Activated CD4-positive, alpha-beta T cell treated with anti-CD3 and anti-CD28 coated beads for 36 hours (primary cell): ENCODE measurements at regions of chr3 and their contacts with region 1.

Region 1: GRCh38 chr3:43286115-43286840 is at the start of gene SNRK:
- DNase-seq: peak; percentile 95
- ATAC-seq: peak; percentile 77
- H3K4me3 Mint-ChIP-seq: peak within 1 kb of the TSS; percentile 94
- H3K27ac Mint-ChIP-seq: peak within 1 kb of the TSS; percentile 96
- H3K4me1 Mint-ChIP-seq: peaks cover 39% of the 10 kb centered on the region
- H3K27me3 Mint-ChIP-seq: no peaks in the 10 kb centered on the region
- total RNA-seq, gene SNRK: 19.5 to 22.9 TPM

Region 2: DNA sequence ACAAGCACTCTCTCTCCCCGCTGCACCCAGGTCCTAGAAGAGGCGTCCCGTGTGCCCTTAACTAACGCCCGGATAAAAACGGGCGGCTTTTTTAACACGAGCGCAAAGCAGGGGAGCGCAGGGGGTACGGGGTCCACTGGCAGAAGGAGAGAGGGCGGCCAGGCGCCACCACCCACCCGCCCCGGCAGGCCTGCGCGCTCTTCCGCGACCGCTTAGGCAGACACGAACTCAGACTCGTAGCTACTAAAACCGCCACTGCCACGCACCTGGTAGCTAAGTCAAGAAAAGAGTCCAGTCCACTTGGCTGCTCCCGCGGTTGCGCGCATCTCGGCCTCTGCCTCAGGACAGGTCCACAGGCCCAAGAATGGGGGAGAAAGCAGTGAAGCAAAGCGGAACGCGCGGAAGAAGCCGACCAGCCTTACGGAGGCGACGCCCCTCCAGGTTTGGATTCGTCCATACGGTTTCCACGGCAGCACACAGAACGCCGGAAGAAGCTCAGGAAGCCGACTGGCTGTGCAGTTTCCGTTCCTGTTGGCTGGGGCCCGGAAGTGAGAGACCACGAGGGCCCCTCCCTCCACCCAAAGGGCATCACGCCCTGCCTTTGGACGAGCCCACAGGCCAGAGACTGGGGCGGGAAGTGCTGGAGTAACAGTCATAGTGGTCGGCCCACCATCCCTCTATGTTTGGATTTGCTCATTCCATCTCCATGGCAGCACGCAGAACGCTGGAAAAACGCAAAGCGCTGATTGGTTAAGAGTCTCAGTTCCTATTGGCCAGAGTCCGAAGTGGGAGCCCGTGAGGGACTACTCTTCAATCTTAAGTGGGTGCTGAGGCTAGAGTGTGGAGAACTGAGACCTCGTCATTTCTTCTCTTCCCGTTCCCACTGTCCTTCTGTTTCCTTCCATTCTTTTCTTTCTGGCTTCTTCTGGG is 1324.3 kb before region 1 on chr3 and contains the start of gene ULK4:
- CTCF ChIA-PET with region 1: no interaction called
- POLR2A ChIA-PET with region 1: no interaction called
- intact Hi-C with region 1: loop called in 1 of 2 experiments (anchors 5 kb)
- DNase-seq: peak; percentile 96
- ATAC-seq: peak; percentile 91
- H3K4me3 Mint-ChIP-seq: peak within 1 kb of the TSS; percentile 95
- H3K27ac Mint-ChIP-seq: peak within 1 kb of the TSS; percentile 92
- H3K4me1 Mint-ChIP-seq: peaks cover 13% of the 10 kb centered on the region
- H3K27me3 Mint-ChIP-seq: no peaks in the 10 kb centered on the region
- total RNA-seq, gene ULK4: 13.1 to 14.2 TPM

Region 3: GRCh38 chr3:42772670-42773408 is 513.4 kb before region 1 on chr3 and contains the start of gene CCDC13:
- CTCF ChIA-PET with region 1: no interaction called
- POLR2A ChIA-PET with region 1: no interaction called
- intact Hi-C with region 1: loop called in 1 of 2 experiments (anchors 10 kb)
- DNase-seq: peak; percentile 96
- ATAC-seq: peak; percentile 96
- H3K4me3 Mint-ChIP-seq: peak within 1 kb of the TSS; percentile 83
- H3K27ac Mint-ChIP-seq: peak within 1 kb of the TSS; percentile 82
- H3K4me1 Mint-ChIP-seq: peaks cover 12% of the 10 kb centered on the region
- H3K27me3 Mint-ChIP-seq: no peaks in the 10 kb centered on the region
- total RNA-seq, gene CCDC13: 0.46 to 0.63 TPM

Region 4: DNA sequence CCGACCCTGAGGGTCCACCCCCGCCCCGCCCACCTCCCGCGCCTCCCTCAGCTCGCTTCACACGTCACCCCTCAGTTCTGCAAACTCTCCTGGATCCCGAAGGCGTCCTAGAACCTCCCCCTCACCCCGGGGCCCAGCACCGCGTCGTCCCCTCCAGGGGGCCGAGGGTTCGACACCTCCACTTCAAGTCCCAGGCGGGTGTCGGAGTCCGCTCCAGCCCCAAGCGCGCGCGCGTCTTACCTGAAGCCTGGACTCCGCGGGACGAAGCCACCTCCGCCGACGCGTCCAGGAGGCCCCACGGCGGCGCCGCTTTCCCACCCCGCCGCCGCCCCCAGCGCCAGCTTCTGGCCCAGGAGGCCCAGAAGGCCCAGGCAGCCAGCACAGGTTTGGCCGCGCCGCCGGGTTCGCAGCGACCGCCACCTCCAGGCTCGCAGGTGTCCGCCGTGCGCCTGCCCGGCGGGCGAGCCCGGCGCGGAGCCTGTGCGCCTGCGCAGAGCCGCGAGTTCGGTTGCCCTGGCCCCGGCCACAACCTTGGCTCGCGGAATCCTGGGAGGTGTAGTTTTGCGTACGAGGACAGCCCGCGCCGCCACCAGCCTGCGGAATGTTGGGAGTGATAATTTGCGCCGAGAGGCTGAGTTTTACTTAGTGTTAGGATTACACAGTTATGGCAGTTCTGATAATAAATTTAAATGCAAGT is 180.5 kb before region 1 on chr3 and contains the start of gene POMGNT2:
- CTCF ChIA-PET with region 1: no interaction called
- POLR2A ChIA-PET with region 1: no interaction called
- intact Hi-C with region 1: loop called (anchors 1 to 5 kb)
- DNase-seq: peak; percentile 94
- ATAC-seq: peak; percentile 97
- H3K4me3 Mint-ChIP-seq: peak within 1 kb of the TSS; percentile 72
- H3K27ac Mint-ChIP-seq: peak within 1 kb of the TSS; percentile 58
- H3K4me1 Mint-ChIP-seq: peaks cover 16% of the 10 kb centered on the region
- H3K27me3 Mint-ChIP-seq: no peaks in the 10 kb centered on the region
- total RNA-seq, gene POMGNT2: 8.3 to 8.6 TPM

Region 5: GRCh38 chr3:43296565-43296964 is 10.3 kb after region 1 on chr3:
- CTCF ChIA-PET with region 1: interaction called, 4 read pairs
- POLR2A ChIA-PET with region 1: no interaction called
- intact Hi-C with region 1: loop called in 1 of 2 experiments (anchors 1 kb)
- DNase-seq: peak; percentile 65
- ATAC-seq: peak; percentile 87
- H3K4me3 Mint-ChIP-seq: peak overlapping the region; percentile 52
- H3K27ac Mint-ChIP-seq: peak overlapping the region; percentile 90
- H3K4me1 Mint-ChIP-seq: peaks cover 79% of the 10 kb centered on the region
- H3K27me3 Mint-ChIP-seq: no peaks in the 10 kb centered on the region

Region 6: DNA sequence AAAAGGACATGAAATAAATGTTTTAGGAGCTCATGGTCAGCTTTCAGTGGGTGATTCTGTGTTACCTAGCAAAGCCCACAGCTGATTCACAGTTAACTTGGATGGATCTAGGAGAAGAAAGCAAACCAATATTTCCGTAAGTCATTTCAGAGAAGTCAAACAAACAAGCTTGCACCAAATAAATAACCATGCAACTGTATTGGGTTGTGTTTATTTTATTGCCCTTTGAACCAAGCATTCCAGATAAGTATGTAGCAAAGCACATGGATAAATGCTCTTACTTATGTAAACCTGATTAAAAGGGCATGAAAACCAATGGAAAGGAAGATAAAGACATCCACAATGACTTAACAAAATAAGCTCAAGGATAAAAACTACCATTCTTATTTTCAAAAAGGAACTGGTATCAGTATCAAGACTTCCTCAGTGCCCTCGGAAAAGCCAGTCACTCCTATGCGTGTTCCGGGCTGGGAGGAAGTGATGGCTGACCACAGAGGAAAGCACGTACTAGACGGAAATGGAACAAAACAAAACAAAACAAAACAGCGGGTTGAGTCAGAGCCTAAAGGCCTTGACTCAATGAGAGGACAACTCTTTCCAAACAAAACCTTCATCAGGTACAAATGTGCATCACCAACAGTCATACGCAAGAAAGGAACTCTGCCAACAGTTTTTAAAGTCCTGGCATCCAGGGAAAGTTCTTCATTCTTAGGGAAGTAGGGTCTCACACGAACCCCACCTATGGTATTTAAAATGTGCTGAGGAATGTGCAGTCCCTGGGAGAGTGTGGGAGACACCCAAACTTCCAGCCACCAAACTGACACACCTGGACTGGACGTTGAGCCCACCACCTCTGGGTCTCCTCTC is 103.3 kb after region 1 on chr3:
- CTCF ChIA-PET with region 1: no interaction called
- POLR2A ChIA-PET with region 1: no interaction called
- intact Hi-C with region 1: loop called in 1 of 2 experiments (anchors 2 kb)
- DNase-seq: peak; percentile 81
- ATAC-seq: peak; percentile 94
- H3K4me3 Mint-ChIP-seq: peak overlapping the region; percentile 7
- H3K27ac Mint-ChIP-seq: peak overlapping the region; percentile 77
- H3K4me1 Mint-ChIP-seq: peaks cover 47% of the 10 kb centered on the region
- H3K27me3 Mint-ChIP-seq: no peaks in the 10 kb centered on the region

Region 7: DNA sequence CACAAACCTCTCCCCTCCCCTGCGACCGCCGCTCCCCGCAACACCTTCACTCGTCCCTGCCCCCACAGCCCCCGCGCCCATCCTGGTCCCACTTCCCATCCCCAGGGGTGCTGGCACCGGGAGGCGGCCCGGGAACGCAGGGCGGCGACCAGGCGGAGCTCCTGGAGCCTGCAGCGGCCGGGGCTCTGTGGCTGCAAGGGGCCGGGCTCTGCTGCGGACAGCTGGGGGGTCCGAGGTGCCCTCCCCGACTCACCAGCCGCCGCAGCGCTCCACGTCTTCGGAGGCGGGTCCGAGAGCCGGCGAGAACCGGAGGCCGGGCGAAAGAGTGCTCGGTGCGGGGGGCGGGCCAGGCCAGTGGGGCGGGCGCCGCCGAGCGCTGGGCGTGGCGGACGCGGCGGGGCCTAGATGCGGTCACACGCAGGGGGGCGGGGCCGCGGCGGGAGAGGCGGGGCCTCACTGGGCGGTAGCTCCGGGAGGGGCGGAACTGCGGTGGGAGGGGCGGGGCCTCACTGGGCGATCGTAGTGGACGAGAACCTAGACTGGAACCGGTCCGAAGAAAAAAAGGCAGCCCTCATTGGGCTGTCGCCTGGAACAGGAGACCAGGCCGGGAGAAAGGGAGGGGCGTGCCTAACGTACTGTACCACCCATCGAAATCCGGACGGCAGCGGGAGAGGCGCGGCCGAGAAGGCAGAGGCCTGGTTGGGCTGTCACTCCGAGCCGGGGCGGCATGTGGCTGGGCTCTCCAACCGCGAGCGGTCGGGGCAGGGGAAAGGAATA is 335.6 kb after region 1 on chr3 and contains the start of gene ANO10:
- CTCF ChIA-PET with region 1: no interaction called
- POLR2A ChIA-PET with region 1: no interaction called
- intact Hi-C with region 1: loop called in 1 of 2 experiments (anchors 1 kb)
- DNase-seq: peak; percentile 98
- ATAC-seq: peak; percentile 95
- H3K4me3 Mint-ChIP-seq: peak within 1 kb of the TSS; percentile 83
- H3K27ac Mint-ChIP-seq: peak within 1 kb of the TSS; percentile 87
- H3K4me1 Mint-ChIP-seq: peaks cover 12% of the 10 kb centered on the region
- H3K27me3 Mint-ChIP-seq: no peaks in the 10 kb centered on the region
- total RNA-seq, gene ANO10: 6.9 to 9.4 TPM